CD8-positive, alpha-beta T cell (primary cell): ENCODE measurements at regions of chr15 and their contacts with region 1.

Region 1: GRCh38 chr15:90233376-90234095 is at the start of gene CIB1:
- DNase-seq: peak in 8 of 9 experiments; percentile 32 to 98 (median 94)
- ATAC-seq: peak; percentile 76
- H3K4me3 ChIP-seq: peak within 1 kb of the TSS; percentile 73 to 86
- H3K4me3 Mint-ChIP-seq: peak within 1 kb of the TSS; percentile 94
- H3K27ac ChIP-seq: peak within 1 kb of the TSS; percentile 93
- H3K27ac Mint-ChIP-seq: peak within 1 kb of the TSS; percentile 98
- H3K4me1 ChIP-seq: peaks cover 47% of the 10 kb centered on the region
- H3K4me1 Mint-ChIP-seq: peaks cover 60% of the 10 kb centered on the region
- H3K27me3 ChIP-seq: no peaks in the 10 kb centered on the region
- H3K27me3 Mint-ChIP-seq: no peaks in the 10 kb centered on the region
- CTCF ChIP-seq: no peak
- total RNA-seq, gene CIB1: 251 to 268 TPM

Region 2: GRCh38 chr15:89760303-89761008 is 473.1 kb before region 1 on chr15:
- CTCF ChIA-PET with region 1: no interaction called
- POLR2A ChIA-PET with region 1: no interaction called
- intact Hi-C with region 1: no loop called
- DNase-seq: peak; percentile 32 to 74 (median 64)
- ATAC-seq: peak; percentile 70
- H3K4me3 ChIP-seq: no peak overlapping the region
- H3K4me3 Mint-ChIP-seq: no peak overlapping the region
- H3K27ac ChIP-seq: no peak overlapping the region
- H3K27ac Mint-ChIP-seq: no peak overlapping the region
- H3K4me1 ChIP-seq: no peaks in the 10 kb centered on the region
- H3K4me1 Mint-ChIP-seq: no peaks in the 10 kb centered on the region
- H3K27me3 ChIP-seq: no peaks in the 10 kb centered on the region
- H3K27me3 Mint-ChIP-seq: peaks cover 8% of the 10 kb centered on the region
- CTCF ChIP-seq: peak; percentile 66

Region 3: DNA sequence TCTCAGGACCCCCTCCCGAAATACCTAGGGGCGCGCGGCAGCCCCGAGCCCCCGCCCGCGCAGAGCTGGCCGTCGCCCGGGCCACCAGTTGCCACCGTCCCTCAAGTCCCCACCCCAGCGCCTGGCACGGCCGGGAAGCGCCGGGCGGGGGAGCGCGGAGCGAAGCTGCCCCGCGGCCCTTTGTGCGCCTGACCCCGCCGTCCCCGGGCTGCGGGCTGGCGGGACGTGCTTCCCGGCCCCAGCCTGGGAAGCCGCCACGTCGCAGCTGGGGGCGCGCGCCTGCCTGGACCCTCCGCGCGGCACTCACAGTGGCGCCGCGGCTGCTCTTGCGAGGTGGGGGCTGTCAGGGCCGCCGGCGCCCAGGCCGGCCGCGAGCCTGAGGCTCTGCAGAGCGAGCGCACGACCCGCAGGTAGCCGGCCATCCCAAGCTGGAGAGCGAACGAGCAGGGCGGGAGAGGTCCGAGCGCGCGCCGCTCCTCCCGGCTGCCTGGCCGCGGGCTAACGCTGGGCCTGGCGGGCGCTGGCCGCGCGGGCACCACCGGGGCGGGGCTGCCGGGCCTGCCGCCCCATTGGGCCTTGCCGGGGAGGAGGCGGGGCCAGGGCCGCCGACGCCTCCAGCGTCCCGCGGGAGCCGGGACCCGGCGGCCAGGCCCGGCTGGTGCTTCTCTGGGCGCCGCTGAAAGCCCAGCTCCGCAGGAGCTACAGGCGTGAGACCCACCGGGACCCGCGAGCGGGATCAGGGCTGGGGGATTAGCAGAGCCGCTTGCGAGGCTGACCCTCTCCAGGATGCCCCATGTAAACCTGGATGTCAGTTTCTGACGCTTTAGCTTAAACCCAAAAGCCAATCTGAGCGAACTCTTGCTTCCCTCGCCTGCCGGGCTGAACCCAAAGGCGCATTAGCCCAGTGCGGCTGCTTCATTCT is 131.3 kb before region 1 on chr15 and contains the start of gene IDH2:
- CTCF ChIA-PET with region 1: no interaction called
- POLR2A ChIA-PET with region 1: interaction called, 3 read pairs
- intact Hi-C with region 1: loop called (anchors 1 kb)
- DNase-seq: peak; percentile 26 to 89 (median 68)
- ATAC-seq: peak; percentile 68
- H3K4me3 ChIP-seq: peak within 1 kb of the TSS; percentile 69 to 81
- H3K4me3 Mint-ChIP-seq: peak within 1 kb of the TSS; percentile 91
- H3K27ac ChIP-seq: peak within 1 kb of the TSS; percentile 81 to 87
- H3K27ac Mint-ChIP-seq: peak within 1 kb of the TSS; percentile 100
- H3K4me1 ChIP-seq: peaks cover 41% of the 10 kb centered on the region
- H3K4me1 Mint-ChIP-seq: peaks cover 53% of the 10 kb centered on the region
- H3K27me3 ChIP-seq: no peaks in the 10 kb centered on the region
- H3K27me3 Mint-ChIP-seq: peaks cover 3% of the 10 kb centered on the region
- CTCF ChIP-seq: no peak
- total RNA-seq, gene IDH2: 41.5 to 42.2 TPM

Region 4: DNA sequence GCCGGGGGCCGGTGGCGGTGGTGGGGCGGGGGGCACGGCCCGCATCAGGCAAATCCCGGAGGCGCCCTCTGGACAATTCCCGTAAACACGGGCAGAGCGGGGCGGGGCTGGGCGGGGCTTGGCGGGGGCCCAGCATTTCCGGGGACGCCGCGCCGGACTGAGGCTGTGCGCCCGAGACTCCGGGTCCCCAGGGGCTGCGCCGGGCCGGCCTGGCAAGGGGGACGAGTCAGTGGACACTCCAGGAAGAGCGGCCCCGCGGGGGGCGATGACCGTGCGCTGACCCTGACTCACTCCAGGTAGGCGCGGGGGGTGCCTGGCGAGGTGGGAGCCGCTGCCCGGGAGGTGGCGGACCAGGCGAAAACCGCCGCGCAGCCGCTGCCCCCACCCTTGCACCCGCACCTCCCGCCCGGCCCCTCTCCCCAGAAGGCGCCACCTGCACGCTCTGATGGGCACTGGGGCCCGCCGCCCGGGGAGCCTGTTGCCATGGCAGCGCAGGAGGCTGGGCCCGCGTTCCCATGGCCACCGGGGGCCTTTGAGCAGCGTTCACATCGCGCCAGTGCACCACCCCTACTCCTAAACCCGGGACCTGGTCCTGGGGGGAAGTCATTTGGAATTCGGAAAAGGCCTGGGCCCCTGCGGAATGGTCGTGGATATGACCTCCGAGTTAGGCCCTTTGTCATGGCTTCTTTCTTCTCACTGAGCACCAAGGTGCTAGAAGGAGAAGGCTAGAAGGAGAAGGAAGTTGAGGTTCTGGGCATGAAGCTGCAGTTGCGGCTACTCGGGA is 48.6 kb before region 1 on chr15:
- CTCF ChIA-PET with region 1: no interaction called
- POLR2A ChIA-PET with region 1: no interaction called
- intact Hi-C with region 1: loop called in 1 of 2 experiments (anchors 2 kb)
- DNase-seq: peak; percentile 27 to 71 (median 55)
- ATAC-seq: peak; percentile 84
- H3K4me3 ChIP-seq: peak overlapping the region; percentile 47 to 61
- H3K4me3 Mint-ChIP-seq: peak overlapping the region; percentile 82
- H3K27ac ChIP-seq: no peak overlapping the region
- H3K27ac Mint-ChIP-seq: peak overlapping the region; percentile 57
- H3K4me1 ChIP-seq: peaks cover 10% of the 10 kb centered on the region
- H3K4me1 Mint-ChIP-seq: peaks cover 12% of the 10 kb centered on the region
- H3K27me3 ChIP-seq: no peaks in the 10 kb centered on the region
- H3K27me3 Mint-ChIP-seq: no peaks in the 10 kb centered on the region
- CTCF ChIP-seq: no peak

Region 5: GRCh38 chr15:90219421-90220166 is 13.9 kb before region 1 on chr15:
- CTCF ChIA-PET with region 1: interaction called, 6 read pairs
- POLR2A ChIA-PET with region 1: interaction called, 4 read pairs
- intact Hi-C with region 1: loop called in 1 of 2 experiments (anchors 1 kb)
- DNase-seq: peak; percentile 38 to 75 (median 65)
- ATAC-seq: peak; percentile 98
- H3K4me3 ChIP-seq: no peak overlapping the region
- H3K4me3 Mint-ChIP-seq: no peak overlapping the region
- H3K27ac ChIP-seq: no peak overlapping the region
- H3K27ac Mint-ChIP-seq: no peak overlapping the region
- H3K4me1 ChIP-seq: peaks cover 7% of the 10 kb centered on the region
- H3K4me1 Mint-ChIP-seq: peaks cover 9% of the 10 kb centered on the region
- H3K27me3 ChIP-seq: no peaks in the 10 kb centered on the region
- H3K27me3 Mint-ChIP-seq: no peaks in the 10 kb centered on the region
- CTCF ChIP-seq: peak; percentile 68

Region 6: GRCh38 chr15:90265271-90266060 is 31.9 kb after region 1 on chr15 and contains the start of gene NGRN:
- CTCF ChIA-PET with region 1: interaction called, 7 read pairs
- POLR2A ChIA-PET with region 1: interaction called, 16 read pairs
- intact Hi-C with region 1: loop called (anchors 1 kb)
- DNase-seq: peak; percentile 84 to 95 (median 93)
- ATAC-seq: peak; percentile 81
- H3K4me3 ChIP-seq: peak within 1 kb of the TSS; percentile 79 to 86
- H3K4me3 Mint-ChIP-seq: peak within 1 kb of the TSS; percentile 94
- H3K27ac ChIP-seq: peak within 1 kb of the TSS; percentile 95 to 98
- H3K27ac Mint-ChIP-seq: peak within 1 kb of the TSS; percentile 98
- H3K4me1 ChIP-seq: peaks cover 43% of the 10 kb centered on the region
- H3K4me1 Mint-ChIP-seq: peaks cover 51% of the 10 kb centered on the region
- H3K27me3 ChIP-seq: no peaks in the 10 kb centered on the region
- H3K27me3 Mint-ChIP-seq: no peaks in the 10 kb centered on the region
- CTCF ChIP-seq: no peak
- total RNA-seq, gene NGRN: 57.8 to 62.0 TPM

Region 7: DNA sequence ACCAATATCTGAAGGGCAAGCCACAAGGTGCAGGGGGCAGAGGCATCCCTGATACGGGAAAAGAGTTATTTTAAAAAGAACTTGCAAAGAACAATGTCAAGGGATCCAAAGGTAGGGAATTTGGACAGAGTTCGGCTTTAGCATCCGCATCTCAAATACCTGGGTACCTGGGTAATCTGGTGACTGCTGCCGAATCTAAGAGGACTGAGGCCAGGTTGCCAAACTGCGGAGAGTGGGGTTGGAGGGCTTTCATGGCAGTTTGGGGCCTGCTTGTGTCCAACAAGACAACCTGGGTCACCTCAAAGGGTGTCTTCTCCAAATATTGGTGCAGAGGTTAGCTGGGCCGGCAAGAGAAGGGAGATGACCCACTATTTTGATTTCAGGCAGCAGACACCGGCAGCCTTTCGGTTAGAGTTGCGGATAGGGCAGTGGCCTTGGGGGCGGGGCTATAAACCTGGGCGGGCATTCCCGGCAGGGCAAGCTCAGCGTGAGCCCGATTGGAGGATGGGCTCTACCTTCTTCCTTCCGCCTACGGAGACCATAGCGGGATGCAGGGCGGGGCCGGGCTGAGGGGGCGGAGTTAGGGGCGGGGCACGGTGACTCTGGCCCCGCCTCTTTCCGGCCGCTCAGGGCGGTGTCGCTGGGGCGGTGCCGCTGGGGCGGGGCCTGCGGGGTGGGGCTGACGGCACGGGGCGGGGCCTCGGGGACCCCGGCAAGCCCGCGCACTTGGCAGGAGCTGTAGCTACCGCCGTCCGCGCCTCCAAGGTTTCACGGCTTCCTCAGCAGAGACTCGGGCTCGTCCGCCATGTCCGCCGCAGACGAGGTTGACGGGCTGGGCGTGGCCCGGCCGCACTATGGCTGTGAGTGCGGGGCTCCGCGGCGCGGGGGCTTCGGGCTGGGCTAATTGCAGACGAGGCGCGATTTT is 154.3 kb after region 1 on chr15 and contains the start of gene IQGAP1:
- CTCF ChIA-PET with region 1: no interaction called
- POLR2A ChIA-PET with region 1: interaction called, 4 read pairs
- intact Hi-C with region 1: loop called (anchors 5 kb)
- DNase-seq: peak; percentile 92 to 97 (median 95)
- ATAC-seq: peak; percentile 91
- H3K4me3 ChIP-seq: peak within 1 kb of the TSS; percentile 90 to 94
- H3K4me3 Mint-ChIP-seq: peak within 1 kb of the TSS; percentile 90
- H3K27ac ChIP-seq: peak within 1 kb of the TSS; percentile 86 to 90
- H3K27ac Mint-ChIP-seq: peak within 1 kb of the TSS; percentile 96
- H3K4me1 ChIP-seq: peaks cover 44% of the 10 kb centered on the region
- H3K4me1 Mint-ChIP-seq: peaks cover 45% of the 10 kb centered on the region
- H3K27me3 ChIP-seq: no peaks in the 10 kb centered on the region
- H3K27me3 Mint-ChIP-seq: no peaks in the 10 kb centered on the region
- CTCF ChIP-seq: no peak
- total RNA-seq, gene IQGAP1: 57.4 to 69.5 TPM

Region 8: DNA sequence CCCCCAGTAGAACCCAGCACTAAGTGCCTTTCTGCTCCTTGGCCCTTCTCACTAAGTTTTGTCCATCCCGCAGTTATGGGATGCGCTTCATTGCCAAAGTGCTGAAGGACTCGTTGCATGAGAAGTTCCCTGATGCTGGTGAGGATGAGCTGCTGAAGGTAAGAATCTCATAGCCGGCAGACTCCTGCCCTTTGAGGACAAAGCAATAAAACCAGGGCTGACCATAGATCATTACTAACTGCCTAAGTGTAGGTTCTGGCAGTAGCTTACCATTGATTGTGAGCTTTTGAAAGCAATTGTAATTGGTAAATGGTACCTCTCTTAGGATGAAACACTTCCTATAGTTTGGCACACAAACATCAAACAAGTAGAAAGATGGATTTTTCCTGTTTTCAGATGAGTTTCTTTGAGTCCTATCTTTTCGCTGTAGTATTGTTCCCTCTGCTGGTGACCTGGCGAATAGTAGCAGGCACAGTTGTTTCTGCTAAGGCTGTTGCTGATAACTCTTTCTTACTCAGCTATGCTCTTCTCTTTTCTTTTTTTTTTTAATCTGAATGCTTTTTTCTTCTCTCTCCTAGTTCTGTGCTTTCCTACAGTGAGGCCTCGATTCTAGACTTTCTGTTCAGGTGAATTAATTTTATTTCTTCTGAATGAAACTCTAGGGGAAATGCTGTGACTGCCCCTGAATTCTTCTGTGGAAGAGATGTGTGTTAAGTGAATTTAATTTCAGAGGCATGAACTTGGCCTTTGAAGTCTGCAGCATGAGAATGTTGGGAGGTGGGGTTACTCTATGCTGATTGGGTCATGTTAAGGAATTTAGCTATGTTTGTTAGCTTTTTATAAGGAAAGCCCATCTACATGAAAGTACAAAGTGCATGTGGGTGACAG is 248.8 kb after region 1 on chr15:
- CTCF ChIA-PET with region 1: no interaction called
- POLR2A ChIA-PET with region 1: no interaction called
- intact Hi-C with region 1: no loop called
- DNase-seq: peak in 8 of 9 experiments; percentile 10 to 67 (median 49)
- ATAC-seq: peak; percentile 67
- H3K4me3 ChIP-seq: no peak overlapping the region
- H3K4me3 Mint-ChIP-seq: no peak overlapping the region
- H3K27ac ChIP-seq: no peak overlapping the region
- H3K27ac Mint-ChIP-seq: no peak overlapping the region
- H3K4me1 ChIP-seq: peaks cover 12% of the 10 kb centered on the region
- H3K4me1 Mint-ChIP-seq: peaks cover 24% of the 10 kb centered on the region
- H3K27me3 ChIP-seq: no peaks in the 10 kb centered on the region
- H3K27me3 Mint-ChIP-seq: no peaks in the 10 kb centered on the region
- CTCF ChIP-seq: peak; percentile 84

Region 9: DNA sequence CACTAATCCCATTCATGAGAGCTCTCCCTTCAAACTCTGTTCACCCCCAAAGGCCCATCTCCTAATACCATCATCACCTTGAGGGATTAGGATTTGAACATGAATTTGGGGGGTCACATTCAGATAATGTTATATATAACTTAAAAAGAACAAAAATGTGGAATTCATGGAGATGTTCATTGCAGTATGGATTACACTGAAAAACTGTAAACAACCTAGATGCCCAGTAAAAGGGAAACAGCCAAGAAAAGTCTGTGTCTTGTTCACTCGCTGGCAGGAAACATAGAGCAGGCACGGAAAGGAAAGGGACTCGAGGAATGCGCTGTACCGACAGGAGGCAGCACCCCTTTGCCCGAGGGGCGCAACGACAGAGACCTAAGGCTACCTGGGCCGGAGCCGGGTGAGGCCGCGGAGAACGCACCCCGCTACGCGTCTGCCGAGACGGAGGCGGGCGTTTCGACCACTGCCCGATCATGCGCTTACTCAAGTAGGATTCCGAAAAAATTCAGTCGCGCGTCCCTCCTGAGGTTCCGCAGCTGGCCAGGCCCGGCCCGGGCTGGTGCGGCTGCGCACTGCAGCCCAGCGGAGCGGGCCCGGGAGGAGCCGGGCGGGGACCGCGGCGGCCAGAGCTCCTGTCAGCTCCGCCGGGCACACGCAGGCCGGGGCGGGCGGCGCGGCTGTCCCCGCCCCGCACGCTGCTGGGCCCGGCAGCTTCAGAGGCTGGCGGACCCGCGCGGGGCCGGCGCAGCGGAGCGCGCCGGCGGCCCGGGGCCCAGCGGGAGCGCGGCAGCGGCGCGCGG is 668.7 kb after region 1 on chr15:
- CTCF ChIA-PET with region 1: interaction called, 3 read pairs
- POLR2A ChIA-PET with region 1: no interaction called
- intact Hi-C with region 1: loop called in 1 of 2 experiments (anchors 1 kb)
- DNase-seq: peak; percentile 42 to 88 (median 70)
- ATAC-seq: peak; percentile 69
- H3K4me3 ChIP-seq: peak overlapping the region; percentile 65 to 89
- H3K4me3 Mint-ChIP-seq: peak overlapping the region; percentile 92
- H3K27ac ChIP-seq: peak overlapping the region; percentile 65 to 73
- H3K27ac Mint-ChIP-seq: peak overlapping the region; percentile 93
- H3K4me1 ChIP-seq: peaks cover 15% of the 10 kb centered on the region
- H3K4me1 Mint-ChIP-seq: peaks cover 28% of the 10 kb centered on the region
- H3K27me3 ChIP-seq: no peaks in the 10 kb centered on the region
- H3K27me3 Mint-ChIP-seq: no peaks in the 10 kb centered on the region
- CTCF ChIP-seq: peak; percentile 84